ENCODE measurements at regions of chr17 and their contacts with region 1.

Region 1: GRCh38 chr17:36148559-36149295 is 27.7 kb downstream of the TBC1D3B start:
- DNase-seq: peak; percentile 85
- H3K4me3 Mint-ChIP-seq: no peak overlapping the region
- H3K27ac Mint-ChIP-seq: no peak overlapping the region
- H3K4me1 Mint-ChIP-seq: peaks cover 2% of the 10 kb centered on the region
- H3K27me3 Mint-ChIP-seq: peaks cover 24% of the 10 kb centered on the region

Region 2: GRCh38 chr17:35849469-35850348 is 299.0 kb before region 1 on chr17:
- CTCF ChIA-PET with region 1: interaction called, 12 read pairs
- POLR2A ChIA-PET with region 1: no interaction called
- intact Hi-C with region 1: loop called (anchors 10 kb)
- DNase-seq: peak; percentile 62
- H3K4me3 Mint-ChIP-seq: no peak overlapping the region
- H3K27ac Mint-ChIP-seq: no peak overlapping the region
- H3K4me1 Mint-ChIP-seq: peaks cover 13% of the 10 kb centered on the region
- H3K27me3 Mint-ChIP-seq: no peaks in the 10 kb centered on the region

Region 3: GRCh38 chr17:35969558-35970380 is 179.0 kb before region 1 on chr17:
- CTCF ChIA-PET with region 1: interaction called, 433 read pairs
- POLR2A ChIA-PET with region 1: no interaction called
- intact Hi-C with region 1: loop called (anchors 1 kb)
- DNase-seq: peak; percentile 81
- H3K4me3 Mint-ChIP-seq: no peak overlapping the region
- H3K27ac Mint-ChIP-seq: no peak overlapping the region
- H3K4me1 Mint-ChIP-seq: no peaks in the 10 kb centered on the region
- H3K27me3 Mint-ChIP-seq: peaks cover 1% of the 10 kb centered on the region

Region 4: GRCh38 chr17:36008998-36009665 is 139.6 kb before region 1 on chr17:
- CTCF ChIA-PET with region 1: interaction called, 10 read pairs
- POLR2A ChIA-PET with region 1: no interaction called
- intact Hi-C with region 1: no loop called
- DNase-seq: peak; percentile 31
- H3K4me3 Mint-ChIP-seq: no peak overlapping the region
- H3K27ac Mint-ChIP-seq: no peak overlapping the region
- H3K4me1 Mint-ChIP-seq: peaks cover 6% of the 10 kb centered on the region
- H3K27me3 Mint-ChIP-seq: peaks cover 6% of the 10 kb centered on the region

Region 5: DNA sequence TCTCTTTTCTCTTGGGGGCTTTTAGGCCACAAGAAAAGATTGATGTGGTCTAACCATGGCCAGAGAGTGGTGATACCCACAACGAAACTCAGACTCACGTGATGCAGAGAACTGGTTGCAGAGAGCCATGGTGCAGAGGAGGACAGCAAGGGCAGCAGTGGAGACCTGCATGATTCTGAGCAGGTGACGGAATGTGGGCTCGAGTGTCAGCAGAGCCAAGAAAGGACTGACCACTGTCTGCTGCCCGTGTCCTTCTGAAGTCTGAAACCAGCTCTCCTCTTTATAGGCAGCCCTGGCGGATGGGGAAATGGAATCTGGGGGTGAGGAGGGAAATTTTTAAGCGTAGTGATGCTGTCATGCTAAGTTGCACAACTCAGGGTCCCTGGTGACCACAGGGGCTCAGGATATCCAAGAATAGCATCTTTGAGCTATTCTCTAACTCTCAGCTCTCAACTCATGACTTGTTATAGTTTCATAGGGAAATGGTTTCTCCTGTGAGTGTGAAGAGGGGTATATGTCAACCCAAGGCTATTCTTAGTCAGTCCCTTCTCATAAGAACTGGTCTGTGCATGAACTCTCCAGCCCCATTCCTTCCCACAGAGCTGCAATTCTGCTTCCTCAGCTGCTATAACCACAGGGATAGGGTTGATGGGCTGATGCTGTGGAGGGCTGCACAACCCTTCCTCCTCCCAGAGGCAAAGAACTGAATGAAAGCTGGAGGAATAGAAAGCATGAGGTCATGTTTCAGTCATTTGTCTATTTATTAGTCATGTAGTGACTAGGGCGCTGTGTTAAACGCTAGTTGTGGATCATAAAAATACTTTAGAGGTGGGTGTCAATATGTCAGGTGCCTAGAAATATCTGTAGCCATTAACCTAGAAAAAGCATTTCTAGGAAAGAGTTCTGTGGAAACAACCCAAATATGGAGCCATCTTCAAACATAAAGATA is 58.6 kb before region 1 on chr17 and contains the start of gene CCL3:
- CTCF ChIA-PET with region 1: interaction called, 15 read pairs
- POLR2A ChIA-PET with region 1: interaction called, 7 read pairs
- intact Hi-C with region 1: no loop called
- DNase-seq: peak; percentile 79
- H3K4me3 Mint-ChIP-seq: peak within 1 kb of the TSS; percentile 64
- H3K27ac Mint-ChIP-seq: peak within 1 kb of the TSS; percentile 74
- H3K4me1 Mint-ChIP-seq: peaks cover 56% of the 10 kb centered on the region
- H3K27me3 Mint-ChIP-seq: peaks cover 26% of the 10 kb centered on the region
- total RNA-seq, gene CCL3: 981 to 989 TPM

Region 6: GRCh38 chr17:36117505-36118382 is 31.0 kb before region 1 on chr17:
- CTCF ChIA-PET with region 1: interaction called, 68 read pairs
- POLR2A ChIA-PET with region 1: interaction called, 4 read pairs
- intact Hi-C with region 1: loop called (anchors 1 kb)
- DNase-seq: peak; percentile 80
- H3K4me3 Mint-ChIP-seq: no peak overlapping the region
- H3K27ac Mint-ChIP-seq: peak overlapping the region; percentile 40
- H3K4me1 Mint-ChIP-seq: peaks cover 35% of the 10 kb centered on the region
- H3K27me3 Mint-ChIP-seq: peaks cover 27% of the 10 kb centered on the region

Region 7: DNA sequence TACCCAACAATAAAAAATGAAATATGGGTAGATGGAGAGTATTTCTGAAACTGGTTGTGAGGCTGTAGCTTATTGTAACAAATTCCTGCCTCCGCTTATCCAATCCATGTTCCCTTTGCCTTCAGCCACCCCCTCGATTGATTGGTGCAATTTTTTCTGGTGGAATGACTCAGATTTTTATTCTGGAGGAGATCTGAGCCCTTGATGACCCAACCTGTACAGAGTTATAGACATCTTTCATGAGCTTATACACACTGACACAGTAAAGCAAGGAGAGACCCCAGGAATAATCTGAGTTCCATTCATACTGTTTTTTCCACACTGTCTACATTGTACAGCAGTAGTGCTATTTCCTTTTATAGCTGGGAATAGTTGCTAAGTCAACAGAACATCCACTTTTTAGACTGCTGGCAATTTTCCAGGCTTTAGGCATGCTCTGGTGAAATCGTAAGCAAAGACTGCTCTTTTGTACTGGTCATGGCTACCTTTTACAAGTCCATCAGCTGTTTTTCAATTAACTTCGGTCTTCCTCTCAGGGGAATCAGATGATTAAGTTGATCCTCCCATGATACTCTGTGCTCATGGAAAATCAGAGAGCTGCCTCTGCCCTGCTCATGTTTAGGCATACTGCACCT is 15.0 kb before region 1 on chr17:
- CTCF ChIA-PET with region 1: interaction called, 28 read pairs
- POLR2A ChIA-PET with region 1: no interaction called
- intact Hi-C with region 1: no loop called
- DNase-seq: no peak
- H3K4me3 Mint-ChIP-seq: no peak overlapping the region
- H3K27ac Mint-ChIP-seq: no peak overlapping the region
- H3K4me1 Mint-ChIP-seq: no peaks in the 10 kb centered on the region
- H3K27me3 Mint-ChIP-seq: peaks cover 27% of the 10 kb centered on the region